H1 (cell line): ENCODE measurements at regions of chr1 and their contacts with region 1.

Region 1: GRCh38 chr1:150515328-150516048 is at the start of gene FALEC:
- DNase-seq: peak; percentile 87 to 98
- H3K4me3 ChIP-seq: peak within 1 kb of the TSS; percentile 72 to 91 (median 82)
- H3K27ac ChIP-seq: no peak within 1 kb of the TSS
- H3K4me1 ChIP-seq: peaks cover 0 to 4% (median 3%) of the 10 kb centered on the region in 4 experiments; a peak in 5 of 7 replicates
- H3K27me3 ChIP-seq: no peaks in the 10 kb centered on the region; a peak in 1 of 7 replicates
- CTCF ChIP-seq: no peak
- EP300 ChIP-seq: no peak
- POLR2A ChIP-seq: peak in 1 of 2 experiments; percentile 30; a peak in 2 of 3 replicates
- RAD21 ChIP-seq: 0 out of 4 replicates have a peak, but pooled peaks of 1 of the 2 experiments have one; percentile 5
- total RNA-seq, gene FALEC: 1.1 TPM in 1 of 2 replicates, not detected in the other

Region 2: DNA sequence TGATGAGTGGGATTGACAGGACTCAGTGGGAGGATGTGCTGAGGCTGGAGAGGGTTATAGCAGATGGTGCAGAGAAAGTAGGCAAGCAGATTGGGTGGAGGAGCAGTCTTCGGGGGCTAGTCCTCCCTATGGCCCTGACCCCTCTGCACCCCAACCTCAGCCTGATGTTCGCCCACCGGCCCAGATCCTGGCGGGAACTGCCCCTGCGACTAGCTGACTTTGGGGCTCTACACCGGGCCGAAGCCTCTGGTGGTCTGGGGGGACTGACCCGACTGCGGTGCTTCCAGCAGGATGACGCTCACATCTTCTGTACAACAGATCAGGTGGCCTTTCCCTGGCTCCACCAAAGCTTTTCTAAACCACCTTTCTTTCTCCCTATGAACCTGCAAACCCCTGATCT is 17.1 kb before region 1 on chr1:
- CTCF ChIA-PET with region 1: interaction called, 3 read pairs
- POLR2A ChIA-PET with region 1: interaction called, 10 read pairs
- DNase-seq: no peak
- H3K4me3 ChIP-seq: no peak overlapping the region
- H3K27ac ChIP-seq: no peak overlapping the region
- H3K4me1 ChIP-seq: no peaks in the 10 kb centered on the region
- H3K27me3 ChIP-seq: no peaks in the 10 kb centered on the region
- CTCF ChIP-seq: no peak
- EP300 ChIP-seq: no peak
- POLR2A ChIP-seq: no peak
- RAD21 ChIP-seq: no peak

Region 3: DNA sequence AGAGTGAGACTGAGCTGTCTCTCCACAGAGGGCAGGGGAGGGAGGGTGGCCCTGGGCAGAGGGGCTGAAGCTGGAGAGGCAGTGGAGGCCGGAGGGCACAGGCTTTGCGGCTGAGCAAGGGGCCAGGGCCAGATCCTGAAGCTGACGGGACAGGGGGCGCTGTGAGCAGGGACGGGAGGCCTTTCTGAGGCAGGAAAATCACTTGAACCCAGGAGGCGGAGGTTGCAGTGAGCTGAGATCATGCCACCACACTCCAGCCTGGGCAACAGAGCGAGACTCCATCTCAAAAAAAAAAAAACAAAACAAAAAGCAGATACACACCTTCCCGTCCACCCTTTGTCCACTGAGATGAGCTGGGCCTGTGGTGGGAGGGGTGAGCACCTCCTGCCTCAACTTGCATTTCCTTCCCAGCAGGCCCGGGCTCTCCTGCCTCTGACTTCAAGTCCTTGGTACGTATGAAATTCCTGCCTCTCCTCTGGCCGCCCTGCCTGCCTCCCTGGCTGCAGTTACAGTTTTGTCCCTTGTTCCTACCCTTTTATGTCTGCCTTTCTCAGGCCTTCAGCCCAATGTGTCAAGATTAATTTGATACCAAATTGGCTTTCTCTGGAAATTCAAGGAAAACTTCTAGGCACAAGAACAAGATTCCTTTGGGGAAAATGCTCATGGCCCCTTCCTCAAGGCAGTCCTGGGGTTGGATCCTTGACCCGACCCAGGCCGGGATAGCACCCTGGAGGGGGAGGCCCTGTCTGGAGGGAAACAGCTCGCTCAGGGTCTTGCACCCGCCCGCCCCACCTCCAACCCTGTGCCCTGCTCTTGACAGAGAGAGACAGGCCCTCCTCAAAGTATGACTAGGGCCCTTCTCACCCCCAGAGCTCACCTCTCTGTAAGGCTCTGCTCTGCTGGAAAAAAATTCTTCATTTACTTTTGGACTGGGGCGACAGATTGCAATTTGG is 22.5 kb after region 1 on chr1:
- CTCF ChIA-PET with region 1: interaction called, 253 read pairs
- POLR2A ChIA-PET with region 1: interaction called, 10 read pairs
- DNase-seq: peak in 1 of 2 experiments; percentile 82
- H3K4me3 ChIP-seq: no peak overlapping the region
- H3K27ac ChIP-seq: no peak overlapping the region; the same call in 1 of the 2 replicates
- H3K4me1 ChIP-seq: peaks cover 0 to 8% (median 3%) of the 10 kb centered on the region in 4 experiments; a peak in 6 of 7 replicates
- H3K27me3 ChIP-seq: no peaks in the 10 kb centered on the region
- CTCF ChIP-seq: peak; percentile 43 to 62 (median 45)
- EP300 ChIP-seq: no peak
- POLR2A ChIP-seq: no peak
- RAD21 ChIP-seq: peak; percentile 26 to 40; a peak in 3 of 4 replicates